ENCODE measurements at regions of chr22 and their contacts with region 1.

Region 1: DNA sequence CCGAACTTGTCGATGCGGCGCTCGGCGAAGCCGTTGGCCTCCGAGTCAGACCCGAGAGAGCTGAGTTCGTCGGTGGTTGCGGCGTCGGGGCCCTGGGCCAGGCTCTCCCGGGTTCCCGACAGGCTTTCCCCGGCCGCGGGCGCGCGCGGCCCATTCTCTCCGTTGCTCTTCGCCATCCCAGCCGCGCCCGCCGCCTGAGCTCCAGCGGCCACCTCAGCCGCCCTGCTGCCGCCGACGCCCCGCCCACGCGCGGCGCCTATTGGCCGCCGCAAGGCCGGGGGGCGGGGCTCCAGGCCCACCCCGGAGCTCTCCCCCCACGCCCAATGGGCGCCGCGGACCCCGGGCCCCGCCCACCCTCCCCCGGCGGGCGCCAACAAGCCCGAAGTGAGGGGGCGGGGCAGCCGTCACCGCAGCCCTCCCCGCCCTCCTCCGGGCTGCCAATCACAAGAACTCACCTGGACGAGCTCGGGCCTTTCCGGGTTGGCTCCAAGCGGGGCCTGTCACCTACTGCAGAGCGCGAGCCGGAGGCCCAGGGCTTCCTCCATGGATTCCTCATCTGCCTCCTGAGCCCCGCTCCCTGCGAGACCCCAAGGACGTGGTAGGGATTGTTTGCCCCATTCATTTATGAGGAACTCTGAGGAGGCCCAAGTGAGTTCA is at the start of gene TBC1D10A:
- DNase-seq: peak; percentile 96
- ATAC-seq: peak; percentile 88
- H3K4me3 Mint-ChIP-seq: peak within 1 kb of the TSS; percentile 81
- H3K27ac Mint-ChIP-seq: peak within 1 kb of the TSS; percentile 81
- H3K4me1 Mint-ChIP-seq: peaks cover 40% of the 10 kb centered on the region
- H3K27me3 Mint-ChIP-seq: no peaks in the 10 kb centered on the region
- CTCF ChIP-seq: no peak
- total RNA-seq, gene TBC1D10A: 20.5 to 21.1 TPM

Region 2: GRCh38 chr22:30212363-30212995 is 114.4 kb before region 1 on chr22:
- CTCF ChIA-PET with region 1: no interaction called
- POLR2A ChIA-PET with region 1: no interaction called
- intact Hi-C with region 1: no loop called
- DNase-seq: peak; percentile 53
- ATAC-seq: peak; percentile 81
- H3K4me3 Mint-ChIP-seq: no peak overlapping the region
- H3K27ac Mint-ChIP-seq: peak overlapping the region; percentile 70
- H3K4me1 Mint-ChIP-seq: peaks cover 26% of the 10 kb centered on the region
- H3K27me3 Mint-ChIP-seq: no peaks in the 10 kb centered on the region
- CTCF ChIP-seq: no peak

Region 3: GRCh38 chr22:30245985-30246901 is 80.6 kb before region 1 on chr22 and contains the start of gene LIF:
- CTCF ChIA-PET with region 1: no interaction called
- POLR2A ChIA-PET with region 1: no interaction called
- intact Hi-C with region 1: no loop called
- DNase-seq: peak; percentile 74
- ATAC-seq: peak; percentile 57
- H3K4me3 Mint-ChIP-seq: peak within 1 kb of the TSS; percentile 97
- H3K27ac Mint-ChIP-seq: peak within 1 kb of the TSS; percentile 94
- H3K4me1 Mint-ChIP-seq: peaks cover 64% of the 10 kb centered on the region
- H3K27me3 Mint-ChIP-seq: peaks cover 1% of the 10 kb centered on the region
- CTCF ChIP-seq: no peak
- total RNA-seq, gene LIF: 160 to 161 TPM

Region 4: DNA sequence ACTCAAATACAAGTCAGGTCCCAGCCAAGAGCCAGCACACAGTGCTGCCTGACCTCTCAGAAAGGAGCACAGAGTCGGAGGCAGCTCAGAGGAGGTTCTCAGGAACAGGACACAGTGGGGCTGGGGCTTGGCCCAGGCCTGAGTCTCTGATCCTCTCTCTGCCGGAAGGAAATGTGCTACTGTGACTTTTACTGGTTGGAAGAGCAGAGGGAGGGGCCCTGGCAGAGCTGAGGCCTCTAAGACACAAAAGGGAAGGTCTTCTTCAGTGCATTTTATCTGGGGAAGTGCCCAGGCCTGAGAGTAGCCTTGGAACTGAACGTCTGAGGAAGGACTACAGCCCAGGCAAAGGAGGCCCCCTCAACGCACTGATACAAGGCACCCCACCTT is 21.3 kb before region 1 on chr22:
- CTCF ChIA-PET with region 1: interaction called, 5 read pairs
- POLR2A ChIA-PET with region 1: interaction called, 68 read pairs
- intact Hi-C with region 1: loop called (anchors 2 kb)
- DNase-seq: peak; percentile 72
- ATAC-seq: peak; percentile 76
- H3K4me3 Mint-ChIP-seq: peak overlapping the region; percentile 67
- H3K27ac Mint-ChIP-seq: peak overlapping the region; percentile 96
- H3K4me1 Mint-ChIP-seq: peaks cover 95% of the 10 kb centered on the region
- H3K27me3 Mint-ChIP-seq: no peaks in the 10 kb centered on the region
- CTCF ChIP-seq: no peak

Region 5: GRCh38 chr22:30310881-30311771 is 15.7 kb before region 1 on chr22:
- CTCF ChIA-PET with region 1: interaction called, 17 read pairs
- POLR2A ChIA-PET with region 1: interaction called, 68 read pairs
- intact Hi-C with region 1: loop called (anchors 2 kb)
- DNase-seq: no peak
- ATAC-seq: no peak
- H3K4me3 Mint-ChIP-seq: no peak overlapping the region
- H3K27ac Mint-ChIP-seq: peak overlapping the region; percentile 85
- H3K4me1 Mint-ChIP-seq: peaks cover 91% of the 10 kb centered on the region
- H3K27me3 Mint-ChIP-seq: no peaks in the 10 kb centered on the region
- CTCF ChIP-seq: no peak

Region 6: DNA sequence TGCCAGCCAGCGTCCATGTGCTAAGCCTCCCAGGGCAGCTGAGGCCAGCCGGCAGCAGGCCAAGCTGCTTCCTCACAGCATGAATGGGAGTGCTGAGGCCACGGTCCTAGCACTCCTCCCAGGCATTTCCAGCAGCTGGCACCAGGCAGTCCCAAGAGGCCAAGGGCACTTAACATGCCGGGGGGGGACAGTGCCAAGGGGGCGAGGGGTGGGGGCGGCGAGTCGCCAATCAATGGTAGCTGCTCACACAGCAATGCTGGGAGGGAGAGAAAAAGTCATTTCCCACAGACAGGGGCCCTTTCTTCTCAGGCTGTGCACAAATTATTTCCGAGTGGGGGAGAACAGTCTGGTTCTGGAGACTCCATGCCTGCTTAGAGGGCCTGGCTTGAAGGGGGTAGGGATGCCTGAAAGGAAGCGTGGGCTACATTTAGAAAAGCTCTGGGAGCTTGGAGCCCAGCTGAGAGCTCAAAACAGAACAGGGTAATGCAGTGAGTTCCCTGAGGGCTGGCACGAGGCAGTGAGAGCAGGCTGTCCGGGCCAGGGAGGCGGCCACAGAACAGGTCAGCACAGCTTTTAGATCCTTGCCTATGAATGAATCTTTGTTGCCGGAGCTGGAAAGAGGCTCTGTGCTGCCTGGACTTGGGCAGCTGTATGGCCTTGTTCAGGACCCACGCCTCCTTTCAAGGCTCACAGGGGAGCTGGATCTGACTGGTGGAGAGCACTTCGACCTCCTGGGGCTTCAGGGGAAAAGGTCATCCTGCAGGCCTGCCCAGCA is 14.3 kb after region 1 on chr22:
- CTCF ChIA-PET with region 1: interaction called, 4 read pairs
- POLR2A ChIA-PET with region 1: interaction called, 20 read pairs
- intact Hi-C with region 1: no loop called
- DNase-seq: no peak
- ATAC-seq: no peak
- H3K4me3 Mint-ChIP-seq: no peak overlapping the region
- H3K27ac Mint-ChIP-seq: no peak overlapping the region
- H3K4me1 Mint-ChIP-seq: peaks cover 5% of the 10 kb centered on the region
- H3K27me3 Mint-ChIP-seq: no peaks in the 10 kb centered on the region
- CTCF ChIP-seq: no peak